Activated T-helper 2 cell treated with anti-CD3 and anti-CD28 coated beads, Interferon-gamma antibody, Interleukin-2, Interleukin-4, amounts not matched to agents 10 μg/mL and 5 μg/mL and 100 μg/mL, durations not matched to agents 14 hours and 24 hours and 36 hours (primary cell): ENCODE measurements at regions of chr4 and their contacts with region 1.

Region 1: GRCh38 chr4:54227256-54228055 is 1.6 kb upstream of the PDGFRA start:
- DNase-seq: no peak
- H3K4me3 Mint-ChIP-seq: peak overlapping the region; percentile 51
- H3K27ac Mint-ChIP-seq: no peak overlapping the region
- H3K4me1 Mint-ChIP-seq: peaks cover 20% of the 10 kb centered on the region
- H3K27me3 Mint-ChIP-seq: peaks cover 88% of the 10 kb centered on the region

Region 2: GRCh38 chr4:54091637-54092404 is 135.6 kb before region 1 on chr4:
- intact Hi-C with region 1: loop called (anchors 2 kb)
- DNase-seq: peak; percentile 58
- H3K4me3 Mint-ChIP-seq: peak overlapping the region; percentile 85
- H3K27ac Mint-ChIP-seq: peak overlapping the region; percentile 32
- H3K4me1 Mint-ChIP-seq: peaks cover 20% of the 10 kb centered on the region
- H3K27me3 Mint-ChIP-seq: peaks cover 81% of the 10 kb centered on the region

Region 3: GRCh38 chr4:54268151-54268550 is 40.7 kb after region 1 on chr4:
- intact Hi-C with region 1: no loop called
- DNase-seq: no peak
- H3K4me3 Mint-ChIP-seq: no peak overlapping the region
- H3K27ac Mint-ChIP-seq: no peak overlapping the region
- H3K4me1 Mint-ChIP-seq: no peaks in the 10 kb centered on the region
- H3K27me3 Mint-ChIP-seq: peaks cover 3% of the 10 kb centered on the region